AG04450 (cell line): ENCODE measurements at regions of chr11 and their contacts with region 1.

Region 1: DNA sequence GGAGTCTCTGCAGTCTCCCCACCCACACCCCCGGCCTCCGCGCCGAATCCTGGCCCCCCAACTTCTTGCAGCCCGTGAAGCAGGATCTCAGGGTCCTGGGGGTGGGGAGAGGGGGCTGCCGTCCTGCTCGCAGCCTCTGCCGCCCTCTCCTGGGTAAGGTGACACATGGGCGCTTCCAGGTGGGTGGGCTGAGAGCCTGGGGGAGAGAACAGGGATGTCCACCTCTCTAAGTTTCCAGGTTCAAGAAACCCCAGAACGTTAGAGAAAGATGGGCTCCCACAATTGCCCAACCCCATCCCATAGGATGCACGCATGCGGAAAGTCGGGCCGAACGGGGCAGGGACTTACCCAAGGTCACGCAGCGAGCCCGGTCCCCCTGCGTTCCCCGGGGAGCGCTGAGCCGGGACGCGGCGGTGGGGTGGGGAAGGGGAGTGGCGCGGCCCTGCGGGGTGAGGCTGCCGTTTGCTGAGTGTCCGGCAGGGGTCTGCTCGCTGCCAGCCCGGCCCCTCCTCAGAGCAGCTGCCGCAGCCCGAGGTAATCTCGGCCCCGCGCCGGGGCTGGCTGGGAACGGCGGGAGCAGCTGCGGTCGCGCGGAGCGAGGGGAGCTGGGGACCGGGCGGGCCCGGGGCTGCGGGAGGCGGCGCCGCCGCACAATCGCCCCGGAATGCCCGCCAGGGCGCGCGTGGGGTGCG is 705 bp upstream of the CAPN1 start:
- DNase-seq: peak; percentile 10
- H3K4me3 ChIP-seq: peak overlapping the region; percentile 88
- H3K27ac ChIP-seq: peak overlapping the region; percentile 31
- H3K27me3 ChIP-seq: no peaks in the 10 kb centered on the region
- CTCF ChIP-seq: peak; percentile 48

Region 2: GRCh38 chr11:65111744-65112414 is 69.1 kb before region 1 on chr11 and contains the start of gene TM7SF2:
- CTCF ChIA-PET with region 1: interaction called, 10 read pairs
- POLR2A ChIA-PET with region 1: interaction called, 5 read pairs
- DNase-seq: peak; percentile 70
- H3K4me3 ChIP-seq: peak within 1 kb of the TSS; percentile 62
- H3K27ac ChIP-seq: no peak within 1 kb of the TSS
- H3K27me3 ChIP-seq: no peaks in the 10 kb centered on the region
- CTCF ChIP-seq: no peak
- polyA plus RNA-seq, gene TM7SF2: 10.3 and 15.1 TPM in 2 replicates

Region 3: GRCh38 chr11:65134386-65135253 is 46.4 kb before region 1 on chr11 and contains the start of gene SYVN1:
- CTCF ChIA-PET with region 1: no interaction called
- POLR2A ChIA-PET with region 1: interaction called, 10 read pairs
- DNase-seq: peak; percentile 92
- H3K4me3 ChIP-seq: peak within 1 kb of the TSS; percentile 95
- H3K27ac ChIP-seq: peak within 1 kb of the TSS; percentile 99
- H3K27me3 ChIP-seq: no peaks in the 10 kb centered on the region
- CTCF ChIP-seq: no peak
- polyA plus RNA-seq, gene SYVN1: 18.7 and 27.7 TPM in 2 replicates